ENCODE measurements at regions of chr10 and their contacts with region 1.

Region 1: DNA sequence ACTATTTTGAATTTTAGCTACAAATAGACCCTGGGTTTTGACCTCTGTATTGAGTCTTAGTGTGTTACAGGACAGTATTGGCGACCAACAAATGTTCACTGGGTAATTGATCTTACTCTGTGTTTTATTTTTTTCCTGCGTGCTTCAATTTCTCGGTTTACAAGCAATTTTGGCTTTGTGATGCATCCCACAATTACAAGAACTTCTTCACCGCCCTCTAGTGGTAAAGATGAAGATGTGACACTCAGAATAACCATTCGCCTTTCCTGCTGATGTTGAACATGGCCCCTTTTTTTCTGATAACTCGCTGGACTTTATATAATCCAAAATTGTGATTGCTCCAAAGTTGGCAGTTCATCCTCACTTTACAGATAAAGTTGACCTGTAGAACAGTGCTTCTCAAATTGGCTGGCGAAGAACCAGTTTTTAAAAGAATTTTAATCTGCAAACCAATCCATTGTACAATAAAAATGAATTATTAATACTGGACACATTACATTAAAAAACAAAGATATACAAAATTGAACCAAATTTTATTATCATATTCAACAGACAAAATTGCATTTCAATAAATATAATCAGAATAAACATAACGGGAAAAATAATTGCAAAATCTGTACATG is 20.2 kb upstream of the SMC3 start:
- DNase-seq: no peak
- H3K4me3 ChIP-seq: no peak overlapping the region
- H3K27ac ChIP-seq: no peak overlapping the region
- H3K4me1 ChIP-seq: no peaks in the 10 kb centered on the region
- H3K27me3 ChIP-seq: no peaks in the 10 kb centered on the region
- CTCF ChIP-seq: peak; percentile 76 to 86 (median 77)
- POLR2A ChIP-seq: no peak

Region 2: DNA sequence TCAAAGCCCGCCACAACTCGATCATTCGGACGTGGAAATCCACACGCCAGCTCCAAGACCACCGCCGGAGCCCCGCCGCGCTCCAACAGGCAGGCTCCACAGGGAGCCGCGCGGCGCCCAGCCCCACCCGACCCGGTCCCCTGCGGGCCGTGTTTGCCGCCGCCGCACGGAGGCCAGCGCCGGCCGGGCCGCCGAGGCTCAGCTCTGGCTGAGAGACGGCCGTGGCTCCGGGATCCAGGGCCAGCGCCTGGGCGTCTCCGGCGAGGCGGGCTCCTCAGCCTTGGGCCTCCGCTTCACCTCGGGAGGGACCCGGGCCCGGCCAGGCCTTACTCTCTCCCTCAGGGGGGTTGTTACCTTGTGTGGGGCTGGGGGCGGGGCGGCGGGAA is 242.9 kb before region 1 on chr10:
- intact Hi-C with region 1: no loop called
- DNase-seq: peak in 1 of 2 donors; percentile 53
- H3K4me3 ChIP-seq: peak overlapping the region; percentile 80 to 97 (median 86)
- H3K27ac ChIP-seq: peak overlapping the region; percentile 88 to 94
- H3K4me1 ChIP-seq: peaks cover 0 to 24% of the 10 kb centered on the region in 2 donors
- H3K27me3 ChIP-seq: no peaks in the 10 kb centered on the region
- CTCF ChIP-seq: no peak
- POLR2A ChIP-seq: no peak

Region 3: GRCh38 chr10:110326351-110327032 is 220.8 kb before region 1 on chr10:
- intact Hi-C with region 1: loop called (anchors 10 kb)
- DNase-seq: no peak
- H3K4me3 ChIP-seq: no peak overlapping the region
- H3K27ac ChIP-seq: no peak overlapping the region
- H3K4me1 ChIP-seq: no peaks in the 10 kb centered on the region
- H3K27me3 ChIP-seq: no peaks in the 10 kb centered on the region
- CTCF ChIP-seq: no peak
- POLR2A ChIP-seq: no peak

Region 4: DNA sequence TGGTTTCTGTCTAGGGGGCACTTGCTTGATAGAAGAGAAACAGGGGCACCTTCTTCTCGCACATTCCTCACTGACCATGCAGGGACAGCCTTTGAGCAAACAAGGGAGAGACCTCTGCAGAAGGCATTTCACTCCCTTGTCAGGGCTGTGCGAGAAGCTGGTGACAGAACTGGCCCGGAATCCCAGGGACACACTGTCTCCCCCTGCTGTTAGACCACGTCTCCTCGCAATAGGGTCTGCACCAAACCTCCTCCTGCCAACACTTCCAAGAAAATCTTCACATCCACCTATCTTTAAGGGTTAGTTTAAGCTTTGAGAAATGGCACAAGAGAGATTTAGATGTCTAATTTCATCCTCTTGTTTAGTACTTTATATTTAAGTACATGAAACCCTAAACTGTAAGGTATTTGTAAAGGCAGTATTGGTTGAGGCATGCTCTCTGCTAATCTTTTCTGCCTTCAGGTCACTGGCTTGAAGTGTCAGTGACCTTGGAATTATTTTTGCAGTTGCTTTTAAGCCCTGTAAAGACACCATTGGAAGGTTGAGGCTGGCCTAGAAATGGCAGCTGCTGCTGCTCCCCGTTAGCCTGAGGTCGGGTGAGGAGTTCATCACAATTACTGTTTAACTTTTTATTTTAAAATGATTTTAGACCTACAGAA is 133.9 kb after region 1 on chr10:
- intact Hi-C with region 1: no loop called
- DNase-seq: no peak
- H3K4me3 ChIP-seq: no peak overlapping the region
- H3K27ac ChIP-seq: no peak overlapping the region
- H3K4me1 ChIP-seq: no peaks in the 10 kb centered on the region
- H3K27me3 ChIP-seq: no peaks in the 10 kb centered on the region
- CTCF ChIP-seq: no peak
- POLR2A ChIP-seq: no peak

Region 5: GRCh38 chr10:111836571-111836970 is 1289.3 kb after region 1 on chr10:
- intact Hi-C with region 1: no loop called
- DNase-seq: no peak
- H3K4me3 ChIP-seq: no peak overlapping the region
- H3K27ac ChIP-seq: no peak overlapping the region
- H3K4me1 ChIP-seq: no peaks in the 10 kb centered on the region
- H3K27me3 ChIP-seq: no peaks in the 10 kb centered on the region
- CTCF ChIP-seq: no peak
- POLR2A ChIP-seq: no peak